ENCODE measurements at regions of chr20 and their contacts with region 1.

Region 1: GRCh38 chr20:62308102-62308822 is 5.5 kb downstream of the ADRM1 start:
- DNase-seq: no peak
- H3K4me3 ChIP-seq: no peak overlapping the region
- H3K27ac ChIP-seq: peak overlapping the region; percentile 34; the same call in 1 of the 2 replicates
- H3K4me1 ChIP-seq: peaks cover 0 to 9% (median 4%) of the 10 kb centered on the region in 4 experiments; a peak in 5 of 7 replicates
- H3K27me3 ChIP-seq: no peaks in the 10 kb centered on the region
- CTCF ChIP-seq: no peak
- EP300 ChIP-seq: no peak
- POLR2A ChIP-seq: no peak; a peak in 1 of 3 replicates
- RAD21 ChIP-seq: no peak

Region 2: DNA sequence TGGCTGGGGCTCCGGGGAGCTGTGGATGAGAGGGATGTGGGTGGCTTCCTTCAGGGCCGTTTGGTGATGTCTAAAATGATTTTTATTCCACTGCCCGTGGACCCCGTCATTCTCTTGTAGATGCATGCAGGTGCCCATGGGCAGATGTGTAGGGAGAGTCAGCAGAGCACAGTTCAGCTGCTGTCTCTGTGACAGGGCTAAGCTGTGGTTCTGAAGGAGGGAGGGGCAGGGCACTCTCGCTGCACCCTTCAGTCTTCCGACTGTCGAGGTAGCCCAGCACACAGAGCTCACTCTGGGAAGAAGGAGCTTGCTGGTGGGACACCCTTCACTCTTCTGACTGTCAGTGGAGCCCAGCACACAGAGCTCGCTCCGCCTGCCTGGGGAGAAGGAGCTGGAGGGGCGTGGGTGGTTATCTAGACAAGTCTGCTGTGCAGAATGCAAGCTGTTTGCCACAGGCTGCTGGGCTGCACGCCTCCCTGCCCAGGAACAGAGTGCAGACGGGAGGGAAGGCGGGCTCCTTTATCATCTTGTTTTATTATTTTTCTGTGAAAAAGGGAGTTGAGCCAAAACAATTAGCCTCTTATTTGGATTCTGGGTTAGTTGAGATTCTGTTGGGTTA is 33.8 kb before region 1 on chr20:
- CTCF ChIA-PET with region 1: no interaction called
- POLR2A ChIA-PET with region 1: no interaction called
- DNase-seq: no peak
- H3K4me3 ChIP-seq: no peak overlapping the region
- H3K27ac ChIP-seq: no peak overlapping the region
- H3K4me1 ChIP-seq: no peaks in the 10 kb centered on the region
- H3K27me3 ChIP-seq: no peaks in the 10 kb centered on the region
- CTCF ChIP-seq: no peak
- EP300 ChIP-seq: no peak
- POLR2A ChIP-seq: no peak
- RAD21 ChIP-seq: no peak

Region 3: DNA sequence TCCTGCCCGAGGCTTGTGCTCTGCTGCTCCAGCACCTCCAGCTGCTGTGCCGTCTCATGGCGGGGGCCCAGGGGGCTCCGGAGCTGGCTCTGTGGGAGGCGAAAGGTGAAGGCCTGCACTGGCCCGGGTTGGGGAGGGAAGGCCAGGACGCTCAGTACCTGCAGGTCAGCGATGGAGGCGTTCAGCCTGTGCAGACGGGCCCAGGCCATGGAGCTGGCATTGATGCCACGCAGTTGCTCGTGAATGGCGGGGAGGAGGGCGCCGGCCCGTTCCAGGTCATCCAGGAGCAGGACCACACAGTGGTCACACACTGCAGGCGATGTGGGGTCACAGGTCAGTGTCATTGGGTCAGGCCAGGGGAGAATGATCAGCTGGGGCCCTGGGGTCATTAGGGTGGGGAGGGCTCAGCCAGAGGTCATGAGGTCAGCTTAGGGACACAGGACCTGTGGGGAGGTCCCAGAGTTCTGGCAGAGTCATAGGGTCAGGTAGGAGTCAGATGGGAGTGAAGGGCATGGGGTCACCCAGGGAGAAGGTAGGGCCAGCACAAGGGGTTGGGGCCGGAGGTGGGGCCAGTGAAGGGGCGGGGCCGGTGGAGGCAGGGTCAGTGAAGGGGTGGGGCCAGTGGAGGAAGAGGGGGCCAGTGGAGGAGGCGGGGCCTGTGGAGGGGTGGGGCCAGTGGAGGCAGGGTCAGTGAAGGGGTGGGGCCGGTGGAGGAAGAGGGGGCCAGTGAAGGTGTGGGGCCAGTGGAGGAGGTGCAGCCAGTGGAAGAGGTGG is 12.5 kb after region 1 on chr20:
- CTCF ChIA-PET with region 1: interaction called, 8 read pairs
- POLR2A ChIA-PET with region 1: interaction called, 151 read pairs
- DNase-seq: no peak
- H3K4me3 ChIP-seq: no peak overlapping the region
- H3K27ac ChIP-seq: no peak overlapping the region
- H3K4me1 ChIP-seq: no peaks in the 10 kb centered on the region
- H3K27me3 ChIP-seq: no peaks in the 10 kb centered on the region
- CTCF ChIP-seq: no peak
- EP300 ChIP-seq: no peak
- POLR2A ChIP-seq: no peak
- RAD21 ChIP-seq: no peak

Region 4: DNA sequence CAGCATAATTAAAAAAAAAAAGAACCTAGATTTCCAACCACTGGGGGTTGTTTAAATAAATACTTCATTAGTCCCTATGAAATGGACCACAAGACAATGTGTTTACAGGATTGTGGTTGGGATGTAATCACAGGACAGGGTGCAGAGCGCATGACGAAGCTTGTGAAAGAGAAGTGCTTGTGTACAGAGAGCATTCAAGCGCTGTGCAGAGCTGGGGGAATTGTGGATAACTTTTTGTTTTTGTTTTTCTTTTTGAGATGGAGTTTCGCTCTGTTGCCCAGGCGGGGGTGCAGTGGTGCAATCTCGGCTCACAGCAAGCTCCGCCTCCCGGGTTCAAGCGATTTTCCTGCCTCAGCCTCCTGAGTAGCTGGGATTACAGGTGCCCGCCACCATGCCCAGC is 36.5 kb after region 1 on chr20:
- CTCF ChIA-PET with region 1: interaction called, 5 read pairs
- POLR2A ChIA-PET with region 1: interaction called, 13 read pairs
- DNase-seq: no peak
- H3K4me3 ChIP-seq: no peak overlapping the region
- H3K27ac ChIP-seq: no peak overlapping the region
- H3K4me1 ChIP-seq: no peaks in the 10 kb centered on the region
- H3K27me3 ChIP-seq: no peaks in the 10 kb centered on the region
- CTCF ChIP-seq: no peak
- EP300 ChIP-seq: no peak
- POLR2A ChIP-seq: no peak
- RAD21 ChIP-seq: no peak

Measured in H1 (cell line).